KBM-7 (cell line): ENCODE measurements at regions of chr6 and their contacts with region 1.

Region 1: GRCh38 chr6:108558372-108559096 is 2.2 kb upstream of the FOXO3 start:
- DNase-seq: peak; percentile 97

Region 2: GRCh38 chr6:108782179-108783041 is 223.9 kb after region 1 on chr6:
- in situ Hi-C with region 1: loop called (anchors 25 kb)
- DNase-seq: peak; percentile 86